Activated naive CD4-positive, alpha-beta T cell treated with anti-CD3 and anti-CD28 coated beads, Interleukin-2, amount 10 ng/mL, durations not matched to agents 7 days and 5 days (primary cell): ENCODE measurements at regions of chr1 and their contacts with region 1.

Region 1: GRCh38 chr1:220733090-220733601 is 15.0 kb upstream of the MTARC2 start:
- DNase-seq: peak; percentile 85
- H3K4me3 Mint-ChIP-seq: no peak overlapping the region
- H3K27ac Mint-ChIP-seq: peak overlapping the region; percentile 46
- H3K4me1 Mint-ChIP-seq: peaks cover 20% of the 10 kb centered on the region
- H3K27me3 Mint-ChIP-seq: no peaks in the 10 kb centered on the region

Region 2: DNA sequence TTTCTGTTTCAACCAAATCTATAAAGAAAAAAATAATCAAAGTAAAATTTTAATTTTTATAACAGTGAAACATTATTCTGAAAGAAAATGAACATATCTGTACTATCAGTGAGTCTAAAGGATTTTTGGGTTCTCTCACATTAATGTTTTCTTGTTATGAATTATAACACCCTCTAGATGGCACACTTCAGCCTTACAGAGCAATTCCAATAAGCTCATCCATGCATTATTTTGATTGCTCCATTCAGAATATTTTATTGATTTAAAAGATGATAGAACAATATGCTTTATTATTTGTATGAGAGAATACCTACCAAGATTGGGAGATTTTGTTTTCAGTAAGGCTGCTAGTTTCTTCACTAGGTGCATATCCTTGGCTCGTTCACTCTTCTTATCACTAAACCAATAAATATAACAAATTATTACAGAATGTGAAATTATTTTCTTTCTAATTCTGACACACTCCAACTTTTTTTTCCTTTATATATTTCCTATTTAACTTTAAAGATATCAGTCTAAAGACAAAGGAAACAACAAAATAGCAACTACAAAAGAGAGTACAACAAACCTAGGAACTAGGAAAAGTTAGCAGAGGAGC is 543.3 kb before region 1 on chr1:
- CTCF ChIA-PET with region 1: interaction called, 11 read pairs
- DNase-seq: no peak
- H3K4me3 Mint-ChIP-seq: no peak overlapping the region
- H3K27ac Mint-ChIP-seq: no peak overlapping the region
- H3K4me1 Mint-ChIP-seq: no peaks in the 10 kb centered on the region
- H3K27me3 Mint-ChIP-seq: no peaks in the 10 kb centered on the region

Region 3: GRCh38 chr1:220294846-220295301 is 438.3 kb before region 1 on chr1:
- CTCF ChIA-PET with region 1: interaction called, 18 read pairs
- DNase-seq: no peak
- H3K4me3 Mint-ChIP-seq: no peak overlapping the region
- H3K27ac Mint-ChIP-seq: no peak overlapping the region
- H3K4me1 Mint-ChIP-seq: no peaks in the 10 kb centered on the region
- H3K27me3 Mint-ChIP-seq: no peaks in the 10 kb centered on the region

Region 4: GRCh38 chr1:220681220-220681880 is 51.8 kb before region 1 on chr1:
- CTCF ChIA-PET with region 1: interaction called, 10 read pairs
- DNase-seq: no peak
- H3K4me3 Mint-ChIP-seq: no peak overlapping the region
- H3K27ac Mint-ChIP-seq: no peak overlapping the region
- H3K4me1 Mint-ChIP-seq: peaks cover 6% of the 10 kb centered on the region
- H3K27me3 Mint-ChIP-seq: peaks cover 18% of the 10 kb centered on the region

Region 5: DNA sequence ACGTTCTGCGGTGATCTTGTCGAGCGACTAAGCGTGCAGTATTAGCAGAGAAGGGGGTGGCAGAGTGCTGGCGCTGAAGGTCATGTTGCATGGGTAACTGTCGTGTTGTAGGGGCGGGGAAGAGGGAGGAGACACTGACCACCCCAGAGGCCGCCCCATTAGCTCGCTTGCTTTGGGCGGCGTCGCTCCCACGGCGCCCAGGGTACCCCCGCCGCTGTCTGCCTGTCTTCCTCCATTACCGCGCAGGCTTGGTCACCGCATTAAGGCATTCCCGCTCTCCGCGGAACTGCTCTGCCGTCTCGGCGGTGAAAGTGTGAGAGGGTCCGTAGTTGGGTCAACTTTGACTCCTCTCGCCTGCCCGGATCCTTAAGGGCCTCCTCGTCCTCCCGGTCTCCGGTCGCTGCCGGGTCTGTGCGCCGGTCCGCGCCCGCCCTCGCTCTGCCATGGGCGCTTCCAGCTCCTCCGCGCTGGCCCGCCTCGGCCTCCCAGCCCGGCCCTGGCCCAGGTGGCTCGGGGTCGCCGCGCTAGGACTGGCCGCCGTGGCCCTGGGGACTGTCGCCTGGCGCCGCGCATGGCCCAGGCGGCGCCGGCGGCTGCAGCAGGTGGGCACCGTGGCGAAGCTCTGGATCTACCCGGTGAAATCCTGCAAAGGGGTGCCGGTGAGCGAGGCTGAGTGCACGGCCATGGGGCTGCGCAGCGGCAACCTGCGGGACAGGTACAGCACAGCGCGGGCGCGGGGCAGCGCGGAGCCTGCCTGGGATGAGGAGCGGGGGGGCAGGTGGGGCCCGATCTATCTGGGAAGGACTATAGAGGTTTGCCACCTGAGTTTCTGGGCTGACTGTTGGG is 15.2 kb after region 1 on chr1 and contains the start of gene MTARC2:
- CTCF ChIA-PET with region 1: interaction called, 10 read pairs
- DNase-seq: peak; percentile 28
- H3K4me3 Mint-ChIP-seq: peak within 1 kb of the TSS; percentile 38
- H3K27ac Mint-ChIP-seq: no peak within 1 kb of the TSS
- H3K4me1 Mint-ChIP-seq: peaks cover 9% of the 10 kb centered on the region
- H3K27me3 Mint-ChIP-seq: peaks cover 70% of the 10 kb centered on the region

Region 6: GRCh38 chr1:220776720-220777326 is 43.7 kb after region 1 on chr1:
- CTCF ChIA-PET with region 1: interaction called, 15 read pairs
- DNase-seq: peak; percentile 77
- H3K4me3 Mint-ChIP-seq: no peak overlapping the region
- H3K27ac Mint-ChIP-seq: no peak overlapping the region
- H3K4me1 Mint-ChIP-seq: no peaks in the 10 kb centered on the region
- H3K27me3 Mint-ChIP-seq: peaks cover 12% of the 10 kb centered on the region